Left ventricle myocardium inferior (tissue), 1 donor: ENCODE measurements at regions of chr1 and their contacts with region 1.

Region 1: DNA sequence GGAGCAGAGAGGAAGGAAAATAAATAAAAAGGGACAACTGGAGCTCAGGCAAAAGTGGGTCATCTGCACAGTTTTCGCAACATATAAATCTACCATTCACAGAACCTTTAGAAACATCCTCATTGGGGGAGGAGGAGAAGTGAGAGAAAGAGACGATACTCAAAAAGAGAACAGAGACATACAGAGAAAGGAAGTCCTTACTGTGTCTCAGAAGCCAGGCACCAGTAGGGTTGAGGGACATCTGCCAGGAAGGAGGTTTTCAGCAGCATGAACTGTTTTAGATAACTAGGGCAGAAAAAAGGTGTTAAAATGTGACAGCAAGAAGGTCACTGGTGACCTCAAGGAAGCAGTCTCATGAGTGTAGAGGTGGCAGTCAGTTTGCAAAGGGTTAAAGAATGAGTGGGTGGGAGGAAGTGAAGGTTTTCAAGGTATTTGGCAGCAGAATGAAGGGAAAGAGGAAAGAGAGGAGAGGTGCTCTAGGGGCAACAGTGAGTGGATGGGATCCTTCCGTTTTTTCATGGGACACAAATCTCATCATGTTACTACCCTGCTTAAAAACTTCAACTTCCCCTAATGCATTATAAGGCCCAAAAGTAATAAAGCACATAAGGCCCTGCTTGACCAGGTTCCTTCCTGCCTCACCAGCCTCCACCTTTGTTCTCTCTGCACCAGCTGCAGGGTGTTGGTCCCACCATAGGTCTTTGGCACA is 9.5 kb downstream of the JAK1 start:
- DNase-seq: no peak
- H3K4me3 ChIP-seq: no peak overlapping the region
- H3K27ac ChIP-seq: peak overlapping the region; percentile 87
- H3K4me1 ChIP-seq: peaks cover 96% of the 10 kb centered on the region
- H3K27me3 ChIP-seq: no peaks in the 10 kb centered on the region
- CTCF ChIP-seq: no peak

Region 2: GRCh38 chr1:64898107-64898845 is 58.6 kb before region 1 on chr1:
- intact Hi-C with region 1: loop called (anchors 10 kb)
- DNase-seq: peak; percentile 79
- H3K4me3 ChIP-seq: peak overlapping the region; percentile 16
- H3K27ac ChIP-seq: peak overlapping the region; percentile 85
- H3K4me1 ChIP-seq: peaks cover 87% of the 10 kb centered on the region
- H3K27me3 ChIP-seq: no peaks in the 10 kb centered on the region
- CTCF ChIP-seq: no peak

Region 3: GRCh38 chr1:65059930-65060538 is 103.1 kb after region 1 on chr1:
- intact Hi-C with region 1: no loop called
- DNase-seq: no peak
- H3K4me3 ChIP-seq: no peak overlapping the region
- H3K27ac ChIP-seq: peak overlapping the region; percentile 24
- H3K4me1 ChIP-seq: peaks cover 97% of the 10 kb centered on the region
- H3K27me3 ChIP-seq: no peaks in the 10 kb centered on the region
- CTCF ChIP-seq: peak; percentile 80